Psoas muscle (tissue), 8 donors: ENCODE measurements at regions of chr10 and their contacts with region 1.

Region 1: GRCh38 chr10:110989016-110989415 is 69.6 kb downstream of the SHOC2 start:
- DNase-seq: no peak
- ATAC-seq: no peak
- H3K4me3 ChIP-seq: no peak overlapping the region
- H3K27ac ChIP-seq: no peak overlapping the region
- H3K4me1 ChIP-seq: peaks cover 11% of the 10 kb centered on the region
- H3K27me3 ChIP-seq: no peaks in the 10 kb centered on the region
- CTCF ChIP-seq: no peak

Region 2: GRCh38 chr10:110932505-110933180 is 56.4 kb before region 1 on chr10:
- intact Hi-C with region 1: loop called in 1 of 2 experiments (anchors 10 kb)
- DNase-seq: no peak
- ATAC-seq: no peak
- H3K4me3 ChIP-seq: no peak overlapping the region
- H3K27ac ChIP-seq: no peak overlapping the region
- H3K4me1 ChIP-seq: peaks cover 9% of the 10 kb centered on the region
- H3K27me3 ChIP-seq: no peaks in the 10 kb centered on the region
- CTCF ChIP-seq: no peak